Activated CD8-positive, alpha-beta T cell treated with anti-CD3 and anti-CD28 coated beads, Interleukin-2, amount 10 ng/mL, durations not matched to agents 7 days and 5 days (primary cell): ENCODE measurements at regions of chr6 and their contacts with region 1.

Region 1: GRCh38 chr6:129748212-129748900 is 38.4 kb upstream of the ARHGAP18 start:
- DNase-seq: peak; percentile 77
- ATAC-seq: peak; percentile 94
- H3K4me3 Mint-ChIP-seq: peak overlapping the region; percentile 60
- H3K27ac Mint-ChIP-seq: peak overlapping the region; percentile 91
- H3K4me1 Mint-ChIP-seq: peaks cover 57% of the 10 kb centered on the region
- H3K27me3 Mint-ChIP-seq: no peaks in the 10 kb centered on the region

Region 2: DNA sequence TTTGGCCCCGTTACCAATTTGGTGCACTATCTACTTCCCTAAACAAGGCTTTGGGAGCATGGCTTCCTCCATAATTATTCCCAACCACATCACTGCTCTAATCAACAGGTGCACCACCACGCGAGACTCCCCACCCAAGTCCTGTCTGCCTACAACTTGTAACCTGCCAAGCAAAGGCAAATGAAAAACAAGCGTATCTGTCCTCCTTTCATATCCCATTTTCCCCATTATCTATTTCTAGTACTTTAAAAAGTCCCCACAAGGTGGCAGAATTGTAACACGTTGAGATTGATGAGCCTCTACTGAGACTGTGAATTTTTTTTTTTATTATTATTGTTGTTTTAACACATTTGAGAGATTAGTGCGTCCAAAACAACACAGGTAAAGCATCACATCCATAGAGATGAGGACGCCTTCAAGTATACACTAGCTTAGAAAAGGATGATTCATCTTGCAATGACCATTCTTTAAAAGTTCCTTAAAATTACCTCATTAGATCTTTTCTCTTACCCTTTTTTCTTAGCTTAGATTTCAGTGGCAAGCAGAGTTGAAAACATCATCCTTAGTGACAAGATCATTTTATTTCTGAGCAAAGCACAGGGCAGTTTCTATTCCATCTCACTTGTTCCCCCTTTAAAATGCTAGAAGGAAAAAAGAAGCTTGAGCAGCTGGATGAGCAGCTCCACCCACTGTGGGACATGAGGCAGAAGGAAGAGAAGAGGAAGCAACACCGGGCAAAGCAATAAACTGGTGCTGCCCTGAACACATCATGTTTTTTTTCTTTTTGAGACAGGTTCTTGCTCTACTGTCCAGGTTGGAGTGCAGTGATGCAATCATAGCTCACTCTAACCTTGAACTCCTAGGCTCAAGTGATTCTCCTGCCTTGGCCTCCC is 249.2 kb before region 1 on chr6:
- CTCF ChIA-PET with region 1: interaction called, 14 read pairs
- POLR2A ChIA-PET with region 1: no interaction called
- DNase-seq: peak; percentile 39
- ATAC-seq: peak; percentile 60
- H3K4me3 Mint-ChIP-seq: peak overlapping the region; percentile 0
- H3K27ac Mint-ChIP-seq: peak overlapping the region; percentile 8
- H3K4me1 Mint-ChIP-seq: peaks cover 29% of the 10 kb centered on the region
- H3K27me3 Mint-ChIP-seq: no peaks in the 10 kb centered on the region

Region 3: GRCh38 chr6:129672881-129673643 is 75.3 kb before region 1 on chr6:
- CTCF ChIA-PET with region 1: interaction called, 26 read pairs
- POLR2A ChIA-PET with region 1: interaction called, 3 read pairs
- DNase-seq: peak; percentile 53
- ATAC-seq: peak; percentile 71
- H3K4me3 Mint-ChIP-seq: peak overlapping the region; percentile 68
- H3K27ac Mint-ChIP-seq: peak overlapping the region; percentile 97
- H3K4me1 Mint-ChIP-seq: peaks cover 47% of the 10 kb centered on the region
- H3K27me3 Mint-ChIP-seq: no peaks in the 10 kb centered on the region

Region 4: GRCh38 chr6:129766959-129767728 is 18.8 kb after region 1 on chr6:
- CTCF ChIA-PET with region 1: interaction called, 14 read pairs
- POLR2A ChIA-PET with region 1: no interaction called
- DNase-seq: peak; percentile 77
- ATAC-seq: peak; percentile 88
- H3K4me3 Mint-ChIP-seq: peak overlapping the region; percentile 79
- H3K27ac Mint-ChIP-seq: peak overlapping the region; percentile 48
- H3K4me1 Mint-ChIP-seq: peaks cover 25% of the 10 kb centered on the region
- H3K27me3 Mint-ChIP-seq: peaks cover 41% of the 10 kb centered on the region

Region 5: DNA sequence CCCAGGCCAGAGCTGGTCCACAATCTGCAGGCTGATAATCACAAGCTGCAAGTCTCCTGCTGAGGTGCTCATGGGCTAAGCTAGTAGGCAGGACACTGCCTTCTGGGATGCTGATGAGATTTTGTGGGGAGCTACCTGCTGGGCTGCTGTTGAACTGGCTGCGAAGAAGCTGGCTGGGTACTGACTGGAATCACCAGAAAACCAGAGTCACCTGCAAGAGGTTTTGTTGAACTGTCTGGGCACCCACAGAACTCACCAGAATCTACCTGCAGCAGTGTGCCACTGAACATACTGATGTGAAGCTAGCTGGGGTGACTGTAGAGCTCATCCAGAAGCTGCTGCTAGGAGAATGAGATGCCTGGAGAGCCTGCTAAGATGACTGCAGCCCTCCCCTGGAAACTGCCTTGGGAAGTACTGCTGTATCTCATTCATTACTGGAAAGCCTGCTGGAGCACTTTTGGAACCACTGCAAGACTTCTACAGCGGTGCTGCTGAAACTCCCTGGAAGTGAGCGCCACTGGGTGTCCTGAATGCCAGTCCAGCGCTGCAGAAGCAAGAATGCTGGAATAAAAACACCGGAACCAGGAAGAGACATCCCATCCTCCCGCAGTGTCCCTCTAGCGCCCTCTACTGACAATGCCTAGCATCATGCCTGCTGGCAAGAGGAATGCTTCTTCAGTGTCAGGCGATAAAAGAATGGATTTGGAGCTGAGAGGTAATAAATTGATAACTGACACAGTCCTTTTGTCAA is 26.5 kb after region 1 on chr6:
- CTCF ChIA-PET with region 1: interaction called, 12 read pairs
- POLR2A ChIA-PET with region 1: no interaction called
- DNase-seq: peak; percentile 64
- ATAC-seq: peak; percentile 36
- H3K4me3 Mint-ChIP-seq: no peak overlapping the region
- H3K27ac Mint-ChIP-seq: no peak overlapping the region
- H3K4me1 Mint-ChIP-seq: peaks cover 8% of the 10 kb centered on the region
- H3K27me3 Mint-ChIP-seq: peaks cover 16% of the 10 kb centered on the region

Region 6: DNA sequence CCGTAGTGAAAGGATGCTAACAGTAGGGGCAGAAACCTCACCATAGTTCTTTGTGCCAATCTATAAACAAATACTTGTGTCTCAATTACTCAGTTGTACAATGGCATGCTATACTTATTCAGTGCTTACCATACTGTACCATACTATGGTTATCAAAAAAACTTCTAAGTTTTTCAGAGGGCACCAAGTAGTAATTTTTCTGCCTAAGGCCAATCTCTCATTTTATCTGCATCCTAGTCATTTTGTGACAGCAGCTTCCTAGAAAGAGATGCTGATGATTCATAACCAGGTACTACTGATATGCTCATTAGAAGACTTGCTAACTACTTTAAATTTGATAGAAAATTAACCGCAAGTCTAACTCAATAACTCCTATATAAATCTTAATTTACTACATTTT is 69.9 kb after region 1 on chr6:
- CTCF ChIA-PET with region 1: no interaction called
- POLR2A ChIA-PET with region 1: no interaction called
- DNase-seq: no peak
- ATAC-seq: no peak
- H3K4me3 Mint-ChIP-seq: no peak overlapping the region
- H3K27ac Mint-ChIP-seq: no peak overlapping the region
- H3K4me1 Mint-ChIP-seq: no peaks in the 10 kb centered on the region
- H3K27me3 Mint-ChIP-seq: peaks cover 18% of the 10 kb centered on the region

Region 7: DNA sequence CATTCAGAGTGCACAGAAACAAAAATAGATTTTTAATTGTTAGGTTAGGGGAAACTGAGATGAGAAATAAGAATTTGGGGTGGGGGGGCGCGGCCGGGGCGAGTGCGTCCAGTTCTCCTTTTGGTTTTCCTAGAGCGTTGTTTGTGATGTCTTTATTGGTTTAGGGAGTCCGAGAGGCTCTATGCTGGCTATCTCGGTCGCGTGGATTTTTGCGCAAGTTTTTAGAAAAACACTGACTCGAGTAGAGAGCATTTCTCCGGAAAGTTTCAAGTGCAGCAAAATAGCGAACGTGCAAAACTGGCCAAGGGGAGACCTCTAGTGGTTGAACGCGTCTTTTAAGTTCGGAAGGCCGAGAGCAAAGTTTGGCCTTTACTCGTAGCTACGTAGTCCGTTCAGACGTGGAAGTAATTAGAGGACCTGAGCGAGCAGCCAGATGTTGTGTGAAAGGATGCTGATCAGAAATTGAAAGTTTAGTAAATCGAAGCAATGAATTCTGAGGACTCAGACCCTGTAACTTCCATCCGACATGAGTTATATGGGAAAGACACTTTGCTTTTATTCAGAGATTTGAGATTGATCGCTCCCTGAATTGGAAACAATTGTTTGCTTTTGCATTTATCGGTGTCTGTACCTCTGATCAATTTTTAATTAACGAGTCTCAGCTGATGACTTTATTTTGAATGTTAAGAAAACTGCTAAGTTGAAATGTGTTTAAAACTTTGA is 272.7 kb after region 1 on chr6:
- CTCF ChIA-PET with region 1: interaction called, 20 read pairs
- POLR2A ChIA-PET with region 1: no interaction called
- DNase-seq: peak; percentile 91
- ATAC-seq: peak; percentile 62
- H3K4me3 Mint-ChIP-seq: peak overlapping the region; percentile 96
- H3K27ac Mint-ChIP-seq: peak overlapping the region; percentile 98
- H3K4me1 Mint-ChIP-seq: peaks cover 48% of the 10 kb centered on the region
- H3K27me3 Mint-ChIP-seq: no peaks in the 10 kb centered on the region